Ovary (tissue), 10 donors: ENCODE measurements at regions of chr11 and their contacts with region 1.

Region 1: GRCh38 chr11:74069147-74070047 is 60.5 kb upstream of the UCP3 start:
- DNase-seq: no peak
- H3K4me3 ChIP-seq: no peak overlapping the region
- H3K27ac ChIP-seq: no peak overlapping the region
- H3K4me1 ChIP-seq: peaks cover 3% of the 10 kb centered on the region
- H3K27me3 ChIP-seq: no peaks in the 10 kb centered on the region
- CTCF ChIP-seq: no peak
- EP300 ChIP-seq: no peak
- POLR2A ChIP-seq: no peak

Region 2: DNA sequence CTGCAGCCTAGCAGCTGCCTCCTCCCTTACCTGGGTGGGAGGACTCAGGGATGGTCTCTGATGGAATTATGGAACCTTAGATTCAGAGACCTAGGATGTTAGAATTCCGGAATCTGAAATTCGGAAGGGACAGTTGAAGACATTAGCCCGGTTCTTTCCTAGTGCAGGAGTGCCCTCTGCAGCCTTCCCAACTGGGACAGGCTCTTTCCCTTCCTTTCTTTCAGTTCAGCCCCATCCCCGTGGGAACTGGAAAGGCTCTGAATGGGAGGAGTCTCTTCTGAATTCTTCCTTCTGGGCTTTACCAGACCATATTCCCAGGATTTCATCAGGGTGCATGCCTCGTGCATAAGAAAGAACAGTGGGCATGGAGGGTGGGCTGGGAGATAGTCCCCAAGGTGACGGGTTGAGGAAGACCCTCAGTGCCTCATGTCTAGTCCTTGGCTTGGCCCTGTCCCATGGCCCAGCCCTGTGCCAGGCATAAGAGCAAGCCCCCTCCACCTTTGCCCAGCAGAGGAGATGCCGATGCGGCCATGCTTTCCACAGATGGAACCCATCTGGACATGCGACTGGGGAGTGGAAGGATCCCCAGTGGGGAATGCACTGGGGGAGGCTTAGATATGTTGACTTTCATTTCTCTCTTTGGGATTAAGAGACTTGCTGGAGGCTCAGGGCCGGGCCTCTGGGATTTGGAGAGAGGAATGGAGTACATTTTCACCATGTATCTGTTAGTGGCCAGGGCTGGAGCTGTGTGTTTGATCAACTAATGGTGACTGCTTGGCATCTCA is 104.1 kb before region 1 on chr11:
- intact Hi-C with region 1: loop called in 1 of 4 experiments (anchors 10 kb)
- DNase-seq: no peak
- H3K4me3 ChIP-seq: no peak overlapping the region
- H3K27ac ChIP-seq: no peak overlapping the region
- H3K4me1 ChIP-seq: no peaks in the 10 kb centered on the region
- H3K27me3 ChIP-seq: no peaks in the 10 kb centered on the region
- CTCF ChIP-seq: no peak
- EP300 ChIP-seq: no peak
- POLR2A ChIP-seq: no peak